Right cardiac atrium (tissue), 5 donors: ENCODE measurements at regions of chr5 and their contacts with region 1.

Region 1: GRCh38 chr5:34486160-34486848 is 169.8 kb upstream of the RAI14 start:
- DNase-seq: peak; percentile 82 to 95 (median 87)
- ATAC-seq: peak; percentile 64 to 72
- H3K4me3 ChIP-seq: no peak overlapping the region
- H3K27ac ChIP-seq: no peak overlapping the region
- H3K4me1 ChIP-seq: peaks cover 7% of the 10 kb centered on the region
- H3K27me3 ChIP-seq: no peaks in the 10 kb centered on the region

Region 2: DNA sequence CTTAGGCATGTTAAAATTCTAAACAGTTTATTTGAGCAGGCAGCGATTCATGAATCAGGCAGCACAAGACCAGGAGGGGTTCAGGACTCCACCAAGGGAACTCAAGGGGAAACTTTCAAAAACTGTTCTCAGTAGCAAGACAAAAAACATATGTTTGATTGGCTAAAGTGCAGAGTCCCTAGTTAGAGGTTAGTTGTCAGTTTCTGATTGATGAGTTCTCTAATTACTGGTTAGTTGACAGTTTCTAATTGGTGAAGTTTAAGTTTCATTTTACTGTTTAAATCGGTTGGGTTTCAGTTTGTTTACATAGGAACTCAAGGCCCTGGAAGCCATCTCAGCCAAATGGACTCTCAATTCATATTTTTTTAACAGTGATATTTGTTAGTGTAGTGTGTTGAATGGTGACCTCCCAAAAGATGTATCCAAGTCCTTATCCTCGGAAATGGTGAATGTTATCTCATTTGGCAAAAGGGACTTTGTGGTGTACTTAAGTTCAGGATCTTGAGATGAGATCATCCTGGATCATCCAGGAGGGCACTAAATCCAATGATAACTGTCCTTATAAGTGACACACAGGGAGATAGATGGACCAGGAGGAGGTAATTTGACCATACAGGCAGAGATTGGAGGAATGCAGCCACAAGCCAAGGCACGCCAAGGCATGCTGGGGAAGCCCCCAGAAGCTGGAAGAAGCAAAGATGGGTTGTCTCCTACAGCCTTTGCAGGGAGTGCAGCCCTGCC is 49.4 kb before region 1 on chr5:
- intact Hi-C with region 1: no loop called
- DNase-seq: no peak
- ATAC-seq: no peak
- H3K4me3 ChIP-seq: no peak overlapping the region
- H3K27ac ChIP-seq: no peak overlapping the region
- H3K4me1 ChIP-seq: no peaks in the 10 kb centered on the region
- H3K27me3 ChIP-seq: no peaks in the 10 kb centered on the region

Region 3: DNA sequence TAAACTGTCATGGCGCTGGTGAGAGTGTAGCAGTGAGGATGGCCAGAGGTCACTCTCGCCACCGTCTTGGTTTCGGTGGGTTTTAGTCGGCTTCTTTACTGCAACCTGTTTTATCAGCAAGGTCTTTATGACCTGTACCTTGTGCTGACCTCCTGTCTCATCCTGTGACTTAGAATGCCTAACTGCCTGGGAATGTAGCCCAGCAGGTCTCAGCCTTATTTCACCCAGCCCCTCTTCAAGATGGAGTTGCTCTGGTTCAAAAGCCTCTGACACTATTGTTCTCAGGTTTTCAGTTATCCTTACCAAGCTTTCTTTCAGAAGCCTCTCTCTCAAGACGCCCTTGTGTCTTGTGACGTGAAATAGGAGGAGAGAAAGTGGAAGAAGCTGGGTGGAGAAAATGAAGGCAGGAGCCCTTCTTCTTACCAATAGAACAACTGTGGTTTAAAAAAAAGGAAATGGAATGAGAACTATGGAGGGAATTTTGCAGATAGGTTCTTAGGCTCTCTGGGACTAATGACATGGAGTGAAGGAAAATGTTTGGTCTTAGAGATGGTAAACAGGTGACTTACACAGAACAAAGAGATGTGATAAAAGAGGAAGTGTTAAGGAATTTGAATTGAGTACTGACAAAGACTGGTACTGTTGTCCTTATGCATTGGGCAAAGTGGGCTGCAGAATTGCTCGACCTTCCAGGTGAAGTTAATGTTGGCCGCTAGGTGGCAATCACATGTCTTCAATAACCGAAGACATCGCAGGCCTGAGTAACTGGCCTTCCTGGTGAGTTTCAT is 36.5 kb after region 1 on chr5:
- intact Hi-C with region 1: loop called in 1 of 4 experiments (anchors 5 kb)
- DNase-seq: peak; percentile 63 to 78 (median 64)
- ATAC-seq: peak; percentile 76 to 83
- H3K4me3 ChIP-seq: no peak overlapping the region
- H3K27ac ChIP-seq: no peak overlapping the region
- H3K4me1 ChIP-seq: no peaks in the 10 kb centered on the region
- H3K27me3 ChIP-seq: no peaks in the 10 kb centered on the region

Region 4: DNA sequence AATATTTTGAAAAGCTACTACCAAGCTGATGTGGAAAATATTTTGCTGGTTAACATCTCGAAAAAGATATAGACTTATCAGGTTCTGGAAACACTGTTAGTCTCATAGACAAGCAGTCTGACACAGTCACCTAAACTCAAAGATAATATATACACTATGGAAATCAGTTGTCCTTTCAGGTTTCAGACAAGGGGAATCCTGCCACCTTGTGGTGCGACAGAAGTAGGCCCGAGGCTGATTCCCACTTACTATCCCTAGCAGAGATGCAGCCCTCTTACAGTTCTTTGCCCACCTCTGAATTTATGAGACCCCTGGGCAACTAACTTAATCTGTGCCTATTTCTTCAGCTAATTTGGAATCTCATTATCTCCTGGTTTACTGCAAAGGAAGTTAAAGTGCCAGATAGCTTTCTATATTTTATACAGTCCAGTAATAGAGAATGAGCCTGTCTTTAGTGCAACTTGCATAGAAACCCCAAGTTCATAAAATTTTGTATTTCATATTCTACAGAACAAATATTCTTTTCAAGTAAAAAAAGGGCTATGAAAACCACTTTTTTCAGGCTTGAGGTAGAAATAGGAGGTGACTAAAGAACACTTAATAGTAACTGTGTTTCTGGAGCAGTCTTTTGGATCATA is 412.1 kb after region 1 on chr5:
- intact Hi-C with region 1: loop called in 2 of 4 experiments (anchors 5 kb)
- DNase-seq: peak; percentile 51 to 80 (median 69)
- ATAC-seq: peak; percentile 85 to 86
- H3K4me3 ChIP-seq: no peak overlapping the region
- H3K27ac ChIP-seq: no peak overlapping the region
- H3K4me1 ChIP-seq: no peaks in the 10 kb centered on the region
- H3K27me3 ChIP-seq: no peaks in the 10 kb centered on the region

Region 5: DNA sequence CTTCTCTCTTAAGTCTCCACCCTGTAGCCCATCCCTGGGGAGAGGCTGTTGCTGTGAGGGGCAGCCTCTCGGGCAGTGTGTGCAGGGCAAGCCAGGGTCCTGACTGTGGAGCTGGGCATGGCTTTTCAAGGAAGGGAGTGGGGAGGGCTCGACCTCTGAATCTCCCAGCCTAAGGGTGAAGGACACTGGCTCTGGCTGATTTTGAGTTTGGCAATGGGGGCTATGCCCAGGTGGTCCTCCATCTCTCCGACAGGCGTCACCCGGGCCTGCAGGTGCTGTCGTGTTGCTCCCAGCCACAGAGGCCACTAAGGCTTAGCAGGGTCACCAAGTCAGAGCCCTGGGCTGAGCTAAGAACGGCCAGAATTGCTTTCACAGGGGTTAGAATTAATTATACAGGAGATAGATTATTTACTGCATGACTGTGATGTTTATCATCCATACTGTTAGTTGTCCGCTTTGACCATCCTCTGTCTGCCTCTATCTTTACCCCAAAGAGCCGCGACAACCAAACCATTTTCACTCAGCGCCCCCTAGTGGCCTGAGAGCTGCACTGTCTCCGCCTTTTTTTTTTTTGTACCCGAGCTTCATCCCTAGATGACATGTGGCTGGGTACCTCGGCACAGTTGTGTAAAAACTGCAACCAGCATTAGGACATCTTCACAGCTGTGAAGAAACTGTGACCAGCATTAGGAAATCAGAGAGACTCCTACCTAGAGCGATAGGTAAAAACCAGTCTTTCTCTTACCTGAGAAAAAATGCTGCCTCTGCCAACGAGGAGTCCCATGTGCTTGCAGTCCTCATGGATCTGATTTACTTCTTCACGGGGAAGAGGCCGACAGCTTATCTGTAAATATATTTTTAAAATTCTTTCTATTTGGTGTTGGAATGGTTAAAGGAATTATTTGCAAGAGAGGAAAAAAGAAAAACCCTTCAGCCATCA is 517.0 kb after region 1 on chr5:
- intact Hi-C with region 1: loop called in 3 of 4 experiments (anchors 10 kb)
- DNase-seq: peak; percentile 44 to 74 (median 64)
- ATAC-seq: peak; percentile 51 to 55
- H3K4me3 ChIP-seq: no peak overlapping the region
- H3K27ac ChIP-seq: no peak overlapping the region
- H3K4me1 ChIP-seq: no peaks in the 10 kb centered on the region
- H3K27me3 ChIP-seq: no peaks in the 10 kb centered on the region